AG04450 (cell line): ENCODE measurements at regions of chr10 and their contacts with region 1.

Region 1: GRCh38 chr10:26556748-26557640 is 118.9 kb downstream of the APBB1IP start:
- DNase-seq: no peak
- H3K4me3 ChIP-seq: no peak overlapping the region
- H3K27ac ChIP-seq: no peak overlapping the region
- H3K27me3 ChIP-seq: no peaks in the 10 kb centered on the region
- CTCF ChIP-seq: peak; percentile 71

Region 2: GRCh38 chr10:26334932-26335573 is 221.9 kb before region 1 on chr10:
- CTCF ChIA-PET with region 1: interaction called, 24 read pairs
- POLR2A ChIA-PET with region 1: no interaction called
- DNase-seq: no peak
- H3K4me3 ChIP-seq: no peak overlapping the region
- H3K27ac ChIP-seq: no peak overlapping the region
- H3K27me3 ChIP-seq: no peaks in the 10 kb centered on the region
- CTCF ChIP-seq: peak; percentile 55